Endothelial cell of umbilical vein (primary cell): ENCODE measurements at regions of chr6 and their contacts with region 1.

Region 1: DNA sequence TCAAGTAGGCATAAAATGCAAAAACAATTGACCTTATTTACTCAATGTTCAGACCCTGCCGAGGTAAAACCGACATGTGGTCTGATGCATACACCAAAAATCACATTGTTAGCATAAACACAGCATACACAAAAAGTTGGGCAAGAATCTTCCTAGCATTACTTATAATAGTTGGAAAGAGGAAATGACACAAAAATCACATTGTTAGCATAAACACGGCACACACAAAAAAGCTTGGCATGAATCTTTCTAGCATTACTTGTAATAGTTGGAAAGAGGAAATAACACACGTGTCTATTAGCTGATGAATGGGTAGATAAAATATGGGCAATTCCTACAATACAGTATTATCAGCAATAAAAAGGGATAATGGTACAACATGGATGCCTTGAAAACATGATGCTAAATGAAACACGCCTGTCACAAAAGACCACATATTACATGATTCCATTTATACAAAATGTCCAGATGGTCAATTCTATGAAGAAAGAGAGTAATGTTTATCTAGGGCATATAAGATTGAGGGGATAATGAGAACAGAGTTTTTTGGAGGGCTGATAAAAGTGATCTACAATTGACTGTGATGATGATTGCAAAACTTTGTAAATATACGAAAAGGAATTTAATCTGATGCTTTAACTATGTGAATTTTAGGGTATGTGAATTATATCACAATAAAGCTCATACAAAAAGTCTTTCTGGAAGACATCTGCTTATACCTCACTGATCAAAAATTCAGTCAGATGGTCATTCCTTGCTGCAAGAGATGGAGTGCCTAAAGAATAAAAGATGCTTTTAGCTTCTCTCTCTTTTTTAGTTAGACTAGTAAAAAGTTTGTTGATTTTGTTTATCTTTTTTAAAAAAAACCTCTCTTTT is 1019.5 kb upstream of the CITED2 start:
- DNase-seq: peak; percentile 93
- H3K4me3 ChIP-seq: no peak overlapping the region
- H3K27ac ChIP-seq: peak overlapping the region; percentile 30
- H3K4me1 ChIP-seq: peaks cover 14% of the 10 kb centered on the region
- H3K27me3 ChIP-seq: no peaks in the 10 kb centered on the region
- CTCF ChIP-seq: no peak
- POLR2A ChIP-seq: no peak

Region 2: DNA sequence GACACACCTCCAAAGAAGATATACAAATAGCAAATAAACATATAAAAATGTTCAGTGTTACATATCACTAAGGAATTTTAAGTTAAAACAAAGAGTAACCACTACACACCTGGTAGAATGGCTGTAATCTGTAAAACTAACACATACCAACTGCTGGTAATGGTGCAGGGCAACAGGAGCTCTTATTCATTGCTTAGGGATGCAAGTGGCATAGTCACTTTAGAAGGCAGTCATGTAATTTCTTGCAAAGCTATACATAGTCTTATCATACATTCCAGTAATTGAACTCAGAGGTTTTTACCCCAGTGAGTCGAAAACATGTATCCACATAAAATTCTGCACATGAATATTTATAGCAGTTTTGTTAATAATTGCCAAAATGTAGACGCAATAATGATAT is 112.7 kb before region 1 on chr6:
- CTCF ChIA-PET with region 1: no interaction called
- POLR2A ChIA-PET with region 1: no interaction called
- dilution Hi-C with region 1: no loop called
- intact Hi-C with region 1: loop called (anchors 5 kb)
- DNase-seq: no peak
- H3K4me3 ChIP-seq: no peak overlapping the region
- H3K27ac ChIP-seq: no peak overlapping the region
- H3K4me1 ChIP-seq: peaks cover 5% of the 10 kb centered on the region
- H3K27me3 ChIP-seq: no peaks in the 10 kb centered on the region
- CTCF ChIP-seq: no peak
- POLR2A ChIP-seq: no peak

Region 3: GRCh38 chr6:140303218-140303949 is 90.5 kb before region 1 on chr6:
- CTCF ChIA-PET with region 1: no interaction called
- POLR2A ChIA-PET with region 1: no interaction called
- dilution Hi-C with region 1: no loop called
- intact Hi-C with region 1: no loop called
- DNase-seq: no peak
- H3K4me3 ChIP-seq: no peak overlapping the region
- H3K27ac ChIP-seq: no peak overlapping the region
- H3K4me1 ChIP-seq: no peaks in the 10 kb centered on the region
- H3K27me3 ChIP-seq: no peaks in the 10 kb centered on the region
- CTCF ChIP-seq: no peak
- POLR2A ChIP-seq: no peak

Region 4: GRCh38 chr6:141677598-141678211 is 1283.8 kb after region 1 on chr6:
- CTCF ChIA-PET with region 1: no interaction called
- POLR2A ChIA-PET with region 1: no interaction called
- dilution Hi-C with region 1: no loop called
- intact Hi-C with region 1: loop called (anchors 10 kb)
- DNase-seq: peak; percentile 43
- H3K4me3 ChIP-seq: no peak overlapping the region
- H3K27ac ChIP-seq: no peak overlapping the region
- H3K4me1 ChIP-seq: no peaks in the 10 kb centered on the region
- H3K27me3 ChIP-seq: no peaks in the 10 kb centered on the region
- CTCF ChIP-seq: peak; percentile 46 to 57
- POLR2A ChIP-seq: no peak